ENCODE measurements at regions of chr14 and their contacts with region 1.

Region 1: DNA sequence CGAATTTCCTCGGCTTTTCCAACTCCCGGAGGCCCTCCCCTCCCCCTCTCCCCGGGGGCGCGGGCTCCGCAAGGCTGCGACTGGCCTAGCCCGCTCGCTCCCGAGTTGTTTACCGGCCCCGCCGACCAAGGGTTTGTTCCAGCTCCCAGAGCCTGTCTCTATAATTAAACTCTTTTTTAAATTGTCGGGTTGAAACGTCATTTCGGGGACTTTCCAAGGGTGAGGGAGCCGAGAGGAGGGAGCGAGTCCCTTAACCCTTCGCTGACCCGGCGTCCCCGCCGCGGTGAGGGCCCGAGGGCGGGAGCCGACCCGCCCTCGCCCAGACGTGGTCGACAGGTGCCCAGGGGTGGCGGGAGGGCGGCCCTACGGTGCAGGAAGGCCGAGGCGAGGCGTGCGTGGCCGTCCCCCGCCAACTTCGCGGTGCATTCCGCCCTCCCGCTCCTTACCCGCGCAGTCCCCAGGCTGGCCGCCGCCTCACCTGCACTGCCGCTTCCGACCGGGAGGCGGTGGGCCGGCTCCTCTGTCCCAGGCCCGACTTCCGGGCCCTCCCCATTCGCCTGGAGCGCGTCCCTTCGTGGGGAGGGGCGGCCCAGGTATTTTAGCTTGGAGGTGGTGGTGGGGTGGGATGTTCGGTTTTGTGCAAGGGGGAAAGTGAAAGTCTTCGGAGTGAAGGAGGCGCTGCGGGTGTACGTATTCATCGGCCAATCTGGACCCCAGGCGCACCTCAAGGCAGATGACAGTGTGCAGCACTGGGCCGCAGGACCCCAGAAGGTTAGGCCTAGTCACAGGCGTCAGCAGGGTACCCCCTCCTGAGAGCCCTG is 2.9 kb upstream of the ZFP36L1 start:
- DNase-seq: peak; percentile 89
- ATAC-seq: peak; percentile 57
- H3K4me3 Mint-ChIP-seq: peak overlapping the region; percentile 88
- H3K27ac Mint-ChIP-seq: peak overlapping the region; percentile 100
- H3K4me1 Mint-ChIP-seq: peaks cover 46% of the 10 kb centered on the region
- H3K27me3 Mint-ChIP-seq: no peaks in the 10 kb centered on the region
- CTCF ChIP-seq: peak; percentile 90

Region 2: DNA sequence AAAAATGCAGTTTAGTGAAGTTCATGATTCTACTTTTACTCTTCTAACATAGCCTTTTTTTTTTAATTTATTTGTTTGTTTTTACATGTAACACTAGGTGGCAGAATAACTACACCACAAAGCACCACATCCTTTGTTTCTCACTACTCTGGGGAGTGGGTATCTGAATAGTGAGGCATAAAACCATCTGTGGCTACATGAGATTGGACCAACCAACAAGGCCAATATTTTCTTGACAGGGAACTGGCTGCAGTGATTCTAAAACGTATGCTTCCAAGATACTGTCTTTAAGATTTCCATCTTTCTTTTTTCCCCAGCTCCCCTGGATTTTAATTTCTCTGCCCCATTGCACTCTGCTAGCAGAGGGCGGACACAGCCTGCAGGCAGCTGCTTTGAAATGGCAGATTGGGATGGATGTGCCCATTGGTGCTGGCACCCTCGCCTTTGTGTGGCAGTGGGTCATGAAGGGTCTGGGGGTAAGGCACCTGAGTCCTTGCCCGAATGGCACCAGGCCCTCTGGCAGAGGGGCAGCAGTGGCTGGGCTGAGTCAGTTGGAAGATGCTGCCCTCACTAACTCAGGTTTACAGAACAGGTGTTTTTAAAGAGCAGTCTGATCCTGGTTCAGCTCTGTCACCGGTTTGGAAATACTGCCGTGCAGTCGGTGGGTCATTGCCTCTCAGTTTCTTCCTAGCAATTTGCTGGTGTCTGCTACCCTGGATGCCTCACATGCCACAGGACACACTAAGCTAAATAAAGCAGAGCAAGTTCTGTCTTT is 547.1 kb before region 1 on chr14:
- CTCF ChIA-PET with region 1: interaction called, 87 read pairs
- POLR2A ChIA-PET with region 1: interaction called, 5 read pairs
- intact Hi-C with region 1: no loop called
- DNase-seq: no peak
- ATAC-seq: peak; percentile 70
- H3K4me3 Mint-ChIP-seq: no peak overlapping the region
- H3K27ac Mint-ChIP-seq: no peak overlapping the region
- H3K4me1 Mint-ChIP-seq: peaks cover 41% of the 10 kb centered on the region
- H3K27me3 Mint-ChIP-seq: no peaks in the 10 kb centered on the region
- CTCF ChIP-seq: peak; percentile 87

Region 3: DNA sequence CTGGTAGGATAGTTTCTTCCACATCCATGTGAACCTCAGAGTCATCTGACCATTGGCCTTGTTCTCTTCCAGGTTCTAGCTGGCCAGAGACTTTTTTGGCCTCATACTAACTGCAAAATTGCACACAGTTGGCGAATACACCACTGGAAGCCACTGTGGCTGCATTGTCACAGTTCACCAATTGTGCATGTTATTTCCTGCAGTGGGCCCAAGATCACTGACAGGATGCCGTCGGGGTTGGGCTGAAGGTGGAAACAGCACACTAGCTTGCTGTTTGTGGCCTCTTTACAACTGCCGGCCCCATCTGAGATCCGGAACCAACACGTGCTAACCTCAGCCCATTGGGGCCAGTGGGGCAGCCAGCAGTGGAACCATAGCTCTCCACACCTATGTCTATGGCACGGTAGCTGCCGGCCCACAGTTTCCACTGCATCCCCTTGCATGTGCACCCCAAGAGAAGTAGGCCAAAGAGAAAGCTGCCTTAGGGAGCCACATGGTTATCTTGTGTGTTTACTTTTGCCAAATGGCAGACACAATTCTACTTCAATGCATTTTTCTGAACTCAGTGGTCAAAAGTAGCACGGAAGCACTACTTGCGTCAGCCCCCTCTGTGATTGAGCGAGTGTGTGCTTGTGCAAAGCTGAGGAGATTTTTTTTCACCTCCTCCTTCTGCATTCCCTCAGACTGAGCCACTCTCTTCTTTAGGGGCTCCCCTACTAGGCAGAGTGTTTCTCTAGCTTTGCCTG is 512.3 kb before region 1 on chr14:
- CTCF ChIA-PET with region 1: no interaction called
- POLR2A ChIA-PET with region 1: interaction called, 14 read pairs
- intact Hi-C with region 1: no loop called
- DNase-seq: peak; percentile 78
- ATAC-seq: peak; percentile 48
- H3K4me3 Mint-ChIP-seq: peak overlapping the region; percentile 33
- H3K27ac Mint-ChIP-seq: peak overlapping the region; percentile 82
- H3K4me1 Mint-ChIP-seq: peaks cover 82% of the 10 kb centered on the region
- H3K27me3 Mint-ChIP-seq: no peaks in the 10 kb centered on the region
- CTCF ChIP-seq: no peak

Region 4: DNA sequence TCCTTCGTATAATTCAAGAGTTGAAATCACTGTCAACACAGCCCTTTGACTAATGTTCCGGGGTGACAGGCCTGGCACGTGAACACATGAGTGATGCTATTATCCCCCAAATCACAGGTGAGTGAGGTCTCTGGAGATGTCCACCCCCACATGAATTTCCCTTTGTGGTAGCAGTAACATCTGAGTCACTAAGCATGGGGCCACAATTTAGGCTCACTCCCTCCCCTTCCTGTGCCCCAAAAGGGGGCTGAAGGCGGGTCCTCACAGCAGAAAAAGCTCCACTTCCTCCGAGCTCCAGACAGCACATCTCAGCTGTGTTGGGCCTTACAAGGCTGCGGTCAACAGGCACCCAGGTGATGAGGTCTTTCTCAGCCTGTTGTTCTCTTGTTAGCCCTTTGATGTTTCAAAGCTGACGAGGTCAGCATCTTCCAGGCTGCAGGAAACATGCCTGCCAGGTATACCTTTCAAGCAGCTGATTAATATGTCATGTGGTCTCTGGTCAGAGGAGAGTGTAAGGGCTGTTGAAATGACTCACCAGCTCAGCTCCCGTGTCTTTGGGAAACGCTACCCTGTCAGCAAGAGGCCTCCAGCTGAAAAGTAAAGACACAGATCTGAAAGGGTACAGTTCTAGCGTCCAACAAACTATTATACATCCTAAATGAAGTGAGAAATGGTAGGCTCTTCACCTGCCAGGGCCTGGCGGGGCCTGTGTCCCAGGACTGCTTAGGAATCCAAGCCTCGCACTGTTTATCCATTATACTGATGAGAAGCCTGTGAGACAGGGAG is 110.2 kb before region 1 on chr14:
- CTCF ChIA-PET with region 1: interaction called, 38 read pairs
- POLR2A ChIA-PET with region 1: interaction called, 6 read pairs
- intact Hi-C with region 1: loop called (anchors 5 kb)
- DNase-seq: peak; percentile 92
- ATAC-seq: peak; percentile 90
- H3K4me3 Mint-ChIP-seq: peak overlapping the region; percentile 42
- H3K27ac Mint-ChIP-seq: peak overlapping the region; percentile 87
- H3K4me1 Mint-ChIP-seq: peaks cover 56% of the 10 kb centered on the region
- H3K27me3 Mint-ChIP-seq: no peaks in the 10 kb centered on the region
- CTCF ChIP-seq: no peak

Region 5: DNA sequence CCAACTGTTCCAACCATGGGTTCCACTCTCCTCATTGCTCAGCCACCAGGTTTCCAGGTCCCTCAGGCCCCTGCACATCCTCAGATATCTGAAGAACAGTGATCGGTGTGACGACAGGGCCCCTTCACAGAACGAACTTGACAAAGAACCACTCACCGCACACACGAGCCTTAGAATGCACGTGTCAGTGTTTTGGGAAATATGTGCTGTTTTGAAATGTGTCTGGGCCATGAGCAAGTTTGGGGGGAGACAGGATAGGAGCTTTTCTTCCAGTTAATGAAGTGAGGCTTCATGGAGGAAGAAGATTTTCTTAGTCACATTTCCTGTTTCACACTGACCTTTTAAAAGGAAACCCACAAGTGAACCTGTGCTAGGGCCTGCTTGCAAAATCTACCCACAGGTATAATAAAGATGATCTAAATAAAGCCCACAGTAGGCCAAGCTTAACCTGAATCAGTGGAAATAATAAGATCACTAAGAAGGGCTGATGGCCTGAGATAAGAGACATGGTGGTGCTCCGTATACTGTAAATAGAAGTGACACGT is 61.5 kb before region 1 on chr14:
- CTCF ChIA-PET with region 1: no interaction called
- POLR2A ChIA-PET with region 1: interaction called, 12 read pairs
- intact Hi-C with region 1: no loop called
- DNase-seq: peak; percentile 86
- ATAC-seq: peak; percentile 80
- H3K4me3 Mint-ChIP-seq: peak overlapping the region; percentile 31
- H3K27ac Mint-ChIP-seq: peak overlapping the region; percentile 86
- H3K4me1 Mint-ChIP-seq: peaks cover 51% of the 10 kb centered on the region
- H3K27me3 Mint-ChIP-seq: no peaks in the 10 kb centered on the region
- CTCF ChIP-seq: no peak

Region 6: GRCh38 chr14:68752271-68753006 is 43.4 kb before region 1 on chr14:
- CTCF ChIA-PET with region 1: no interaction called
- POLR2A ChIA-PET with region 1: no interaction called
- intact Hi-C with region 1: no loop called
- DNase-seq: no peak
- ATAC-seq: no peak
- H3K4me3 Mint-ChIP-seq: no peak overlapping the region
- H3K27ac Mint-ChIP-seq: no peak overlapping the region
- H3K4me1 Mint-ChIP-seq: peaks cover 10% of the 10 kb centered on the region
- H3K27me3 Mint-ChIP-seq: no peaks in the 10 kb centered on the region
- CTCF ChIP-seq: no peak

Region 7: GRCh38 chr14:68780358-68781160 is 15.2 kb before region 1 on chr14:
- CTCF ChIA-PET with region 1: interaction called, 58 read pairs
- POLR2A ChIA-PET with region 1: interaction called, 161 read pairs
- intact Hi-C with region 1: no loop called
- DNase-seq: peak; percentile 55
- ATAC-seq: peak; percentile 24
- H3K4me3 Mint-ChIP-seq: peak overlapping the region; percentile 52
- H3K27ac Mint-ChIP-seq: peak overlapping the region; percentile 90
- H3K4me1 Mint-ChIP-seq: peaks cover 67% of the 10 kb centered on the region
- H3K27me3 Mint-ChIP-seq: no peaks in the 10 kb centered on the region
- CTCF ChIP-seq: no peak

Region 8: DNA sequence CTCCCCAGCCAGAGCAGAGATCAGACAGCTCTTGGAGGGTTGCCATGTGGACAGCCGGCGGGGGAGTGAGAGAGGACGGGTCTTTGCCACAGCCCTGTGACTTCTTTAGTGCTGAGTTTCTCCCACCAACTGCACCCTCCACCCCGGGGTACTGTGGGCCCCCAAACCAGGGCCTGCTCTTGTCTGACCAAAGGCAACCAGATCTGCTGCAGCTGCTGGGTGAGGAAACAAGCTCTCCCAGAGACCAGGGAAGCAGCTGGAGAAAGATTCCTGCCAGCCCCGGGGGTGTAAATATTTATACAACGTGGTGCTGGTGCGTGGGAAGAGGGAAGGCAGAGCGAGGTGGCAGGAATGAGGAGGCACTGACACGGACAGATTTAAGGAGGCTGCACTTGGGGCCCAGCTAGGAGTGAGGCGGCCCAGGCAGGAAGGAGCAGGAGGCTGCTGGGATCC is 11.4 kb after region 1 on chr14:
- CTCF ChIA-PET with region 1: interaction called, 268 read pairs
- POLR2A ChIA-PET with region 1: interaction called, 207 read pairs
- intact Hi-C with region 1: no loop called
- DNase-seq: no peak
- ATAC-seq: peak; percentile 29
- H3K4me3 Mint-ChIP-seq: no peak overlapping the region
- H3K27ac Mint-ChIP-seq: peak overlapping the region; percentile 66
- H3K4me1 Mint-ChIP-seq: peaks cover 32% of the 10 kb centered on the region
- H3K27me3 Mint-ChIP-seq: no peaks in the 10 kb centered on the region
- CTCF ChIP-seq: no peak

Measured in activated CD8-positive, alpha-beta T cell treated with anti-CD3 and anti-CD28 coated beads for 36 hours (primary cell).